Vagina (tissue), 2 donors: ENCODE measurements at regions of chr4 and their contacts with region 1.

Region 1: DNA sequence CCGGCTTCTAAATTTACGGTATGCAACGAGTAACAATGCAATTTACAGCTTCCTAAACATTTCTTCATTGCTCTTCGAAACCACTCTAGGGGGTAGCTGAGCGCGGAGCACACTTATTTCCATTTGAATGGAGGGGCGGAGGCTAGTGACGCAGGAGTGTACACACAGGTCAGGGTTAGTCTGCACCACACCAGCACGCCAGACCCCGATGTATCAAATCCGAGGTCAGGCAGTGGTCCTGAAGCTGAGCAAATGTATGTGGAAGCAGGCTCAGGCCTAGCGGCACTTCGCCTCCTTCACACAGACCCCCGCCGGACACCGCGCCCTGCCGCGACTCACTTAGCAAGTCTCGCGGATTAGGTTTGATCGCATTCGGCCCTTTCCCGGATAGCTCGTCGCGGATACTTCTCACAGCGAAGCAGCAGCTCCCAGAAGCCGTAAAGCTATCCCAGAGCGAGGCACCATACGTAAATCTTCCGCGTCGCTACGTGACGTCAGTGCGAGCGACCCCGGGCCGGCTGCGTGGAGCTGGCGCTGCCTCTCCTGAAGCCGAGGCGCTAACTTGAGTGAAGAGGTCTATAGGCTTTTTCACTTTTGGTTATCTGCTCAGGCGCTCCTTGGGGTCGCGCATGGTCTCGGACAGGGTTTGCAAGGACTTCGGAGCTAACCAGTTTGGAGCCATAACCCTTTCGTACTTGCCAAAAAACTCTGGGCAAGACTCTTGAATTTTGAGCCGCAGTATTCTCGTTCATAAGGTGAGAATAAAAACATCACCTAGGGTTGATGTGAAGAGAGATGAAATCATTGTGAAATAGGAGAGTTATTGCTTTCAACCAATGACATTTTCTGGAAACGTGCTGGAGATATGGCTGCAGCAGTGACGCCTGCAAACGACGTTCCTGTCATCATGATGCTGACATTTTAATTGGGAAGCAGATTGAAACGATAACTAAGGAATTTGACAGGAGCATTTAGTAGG is at the start of gene AASDH:
- DNase-seq: peak in 1 of 2 donors; percentile 95
- H3K4me3 ChIP-seq: peak within 1 kb of the TSS; percentile 54 to 74
- H3K27ac ChIP-seq: peak within 1 kb of the TSS; percentile 95
- H3K4me1 ChIP-seq: peaks cover 22% of the 10 kb centered on the region
- H3K27me3 ChIP-seq: no peaks in the 10 kb centered on the region
- CTCF ChIP-seq: no peak
- POLR2A ChIP-seq: peak in 1 of 2 donors; percentile 22
- total RNA-seq, gene AASDH: 6.6 TPM

Region 2: GRCh38 chr4:55491486-55491885 is 895.8 kb before region 1 on chr4:
- intact Hi-C with region 1: no loop called
- DNase-seq: no peak
- H3K4me3 ChIP-seq: no peak overlapping the region
- H3K27ac ChIP-seq: no peak overlapping the region
- H3K4me1 ChIP-seq: no peaks in the 10 kb centered on the region
- H3K27me3 ChIP-seq: no peaks in the 10 kb centered on the region
- CTCF ChIP-seq: no peak
- POLR2A ChIP-seq: no peak

Region 3: GRCh38 chr4:56435306-56435926 is 48.1 kb after region 1 on chr4 and contains the start of gene PPAT:
- intact Hi-C with region 1: loop called (anchors 10 kb)
- DNase-seq: peak; percentile 98 to 99
- H3K4me3 ChIP-seq: peak within 1 kb of the TSS; percentile 83 to 91
- H3K27ac ChIP-seq: peak within 1 kb of the TSS; percentile 96
- H3K4me1 ChIP-seq: peaks cover 33% of the 10 kb centered on the region
- H3K27me3 ChIP-seq: no peaks in the 10 kb centered on the region
- CTCF ChIP-seq: peak in 2 of 3 experiments; percentile 14 to 37
- POLR2A ChIP-seq: peak in 1 of 2 donors; percentile 56
- total RNA-seq, gene PPAT: 3.7 TPM